ENCODE measurements at regions of chr7 and their contacts with region 1.

Region 1: GRCh38 chr7:129780257-129780973 is 168.9 kb downstream of the NRF1 start:
- DNase-seq: peak; percentile 74 to 92
- H3K4me3 ChIP-seq: peak overlapping the region; percentile 55 to 76 (median 61)
- H3K27ac ChIP-seq: no peak overlapping the region
- H3K4me1 ChIP-seq: peaks cover 12 to 55% (median 40%) of the 10 kb centered on the region in 4 experiments
- H3K27me3 ChIP-seq: peaks cover 55 to 78% (median 73%) of the 10 kb centered on the region in 4 experiments
- CTCF ChIP-seq: no peak
- EP300 ChIP-seq: no peak; a peak in 1 of 3 replicates
- POLR2A ChIP-seq: no peak
- RAD21 ChIP-seq: no peak

Region 2: GRCh38 chr7:129767120-129768015 is 13.0 kb before region 1 on chr7:
- CTCF ChIA-PET with region 1: interaction called, 4 read pairs
- POLR2A ChIA-PET with region 1: interaction called, 33 read pairs
- DNase-seq: no peak
- H3K4me3 ChIP-seq: no peak overlapping the region
- H3K27ac ChIP-seq: no peak overlapping the region
- H3K4me1 ChIP-seq: peaks cover 2 to 27% (median 14%) of the 10 kb centered on the region in 4 experiments
- H3K27me3 ChIP-seq: no peaks in the 10 kb centered on the region
- CTCF ChIP-seq: no peak
- EP300 ChIP-seq: no peak
- POLR2A ChIP-seq: no peak
- RAD21 ChIP-seq: no peak

Region 3: GRCh38 chr7:129797214-129797789 is 16.9 kb after region 1 on chr7:
- CTCF ChIA-PET with region 1: interaction called, 4 read pairs
- POLR2A ChIA-PET with region 1: interaction called, 12 read pairs
- DNase-seq: no peak
- H3K4me3 ChIP-seq: no peak overlapping the region
- H3K27ac ChIP-seq: no peak overlapping the region
- H3K4me1 ChIP-seq: peaks cover 3 to 13% (median 8%) of the 10 kb centered on the region in 4 experiments; a peak in 6 of 7 replicates
- H3K27me3 ChIP-seq: no peaks in the 10 kb centered on the region; a peak in 1 of 7 replicates
- CTCF ChIP-seq: no peak
- EP300 ChIP-seq: no peak
- POLR2A ChIP-seq: no peak
- RAD21 ChIP-seq: no peak

Measured in H1 (cell line).